PC-3 (cell line): ENCODE measurements at regions of chr2 and their contacts with region 1.

Region 1: GRCh38 chr2:11129598-11130449 is 25.4 kb upstream of the SLC66A3 start:
- DNase-seq: peak; percentile 72
- ATAC-seq: peak; percentile 65
- H3K4me3 ChIP-seq: peak overlapping the region; percentile 55; the same call in 1 of the 2 replicates
- H3K27ac ChIP-seq: no peak overlapping the region
- H3K4me1 ChIP-seq: peaks cover 21% of the 10 kb centered on the region
- H3K27me3 ChIP-seq: no peaks in the 10 kb centered on the region
- CTCF ChIP-seq: peak; percentile 65

Region 2: DNA sequence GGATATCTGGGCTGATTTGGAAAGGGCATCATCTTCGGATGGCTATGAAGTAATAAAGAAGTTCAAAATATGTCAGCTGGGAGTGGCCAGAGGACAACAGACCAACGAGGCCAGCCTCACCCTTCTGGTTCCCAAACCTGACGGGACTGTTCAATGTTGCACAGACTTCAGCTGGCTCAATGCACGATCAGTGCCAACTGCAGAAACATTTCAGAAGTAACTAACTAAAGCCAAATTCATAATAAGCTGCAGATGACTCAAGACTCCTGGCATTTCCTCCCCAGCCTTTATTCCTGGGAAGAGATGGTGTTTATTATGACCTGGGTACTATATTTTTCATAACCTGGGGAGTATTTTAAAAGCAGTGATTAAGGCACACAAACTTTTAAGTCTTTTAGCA is 412.2 kb before region 1 on chr2:
- CTCF ChIA-PET with region 1: no interaction called
- POLR2A ChIA-PET with region 1: interaction called, 3 read pairs
- intact Hi-C with region 1: loop called (anchors 5 kb)
- DNase-seq: peak; percentile 91
- ATAC-seq: peak; percentile 81
- H3K4me3 ChIP-seq: peak overlapping the region; percentile 20; the same call in 1 of the 2 replicates
- H3K27ac ChIP-seq: peak overlapping the region; percentile 36
- H3K4me1 ChIP-seq: peaks cover 47% of the 10 kb centered on the region
- H3K27me3 ChIP-seq: peaks cover 21% of the 10 kb centered on the region
- CTCF ChIP-seq: no peak

Region 3: DNA sequence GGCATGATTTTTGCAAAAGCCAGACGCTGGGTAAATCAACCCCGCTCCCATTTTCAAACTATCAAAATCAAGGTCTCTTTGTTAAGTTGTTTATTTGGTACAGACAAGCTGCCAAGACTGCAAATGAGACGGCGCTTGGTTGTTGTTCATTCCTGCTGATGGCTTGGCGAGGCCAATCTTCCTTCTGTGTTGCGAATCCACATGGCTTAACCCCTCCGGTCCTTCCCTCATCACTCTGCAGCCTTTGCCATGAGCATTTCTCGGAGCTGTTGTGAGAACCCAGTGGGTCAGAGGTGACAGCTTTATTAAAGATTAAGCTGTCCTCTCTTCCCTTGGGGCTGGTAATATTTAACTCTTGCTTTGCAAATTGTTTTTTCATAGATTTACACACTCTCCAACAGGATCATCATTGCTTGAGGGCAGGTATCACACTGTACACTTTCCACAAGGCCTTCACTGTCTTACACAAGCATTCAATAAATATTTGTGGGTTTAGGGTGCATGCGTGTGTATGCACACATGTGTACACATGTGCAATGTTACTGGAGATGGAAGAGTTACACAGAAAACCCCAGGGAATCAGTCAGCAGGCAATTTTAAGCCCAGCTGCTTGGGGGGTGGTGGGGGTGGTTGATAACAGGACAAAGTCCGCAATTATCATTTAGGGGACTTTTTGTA is 245.9 kb before region 1 on chr2:
- CTCF ChIA-PET with region 1: no interaction called
- POLR2A ChIA-PET with region 1: no interaction called
- intact Hi-C with region 1: no loop called
- DNase-seq: no peak
- ATAC-seq: no peak
- H3K4me3 ChIP-seq: no peak overlapping the region
- H3K27ac ChIP-seq: no peak overlapping the region
- H3K4me1 ChIP-seq: no peaks in the 10 kb centered on the region
- H3K27me3 ChIP-seq: 0 out of 2 replicates have a peak, but pooled peaks cover 4% of the 10 kb centered on the region
- CTCF ChIP-seq: no peak

Region 4: GRCh38 chr2:11004199-11004598 is 125.6 kb before region 1 on chr2:
- CTCF ChIA-PET with region 1: no interaction called
- POLR2A ChIA-PET with region 1: no interaction called
- intact Hi-C with region 1: no loop called
- DNase-seq: peak; percentile 78
- ATAC-seq: peak; percentile 95
- H3K4me3 ChIP-seq: no peak overlapping the region
- H3K27ac ChIP-seq: no peak overlapping the region
- H3K4me1 ChIP-seq: peaks cover 15% of the 10 kb centered on the region
- H3K27me3 ChIP-seq: no peaks in the 10 kb centered on the region
- CTCF ChIP-seq: no peak

Region 5: DNA sequence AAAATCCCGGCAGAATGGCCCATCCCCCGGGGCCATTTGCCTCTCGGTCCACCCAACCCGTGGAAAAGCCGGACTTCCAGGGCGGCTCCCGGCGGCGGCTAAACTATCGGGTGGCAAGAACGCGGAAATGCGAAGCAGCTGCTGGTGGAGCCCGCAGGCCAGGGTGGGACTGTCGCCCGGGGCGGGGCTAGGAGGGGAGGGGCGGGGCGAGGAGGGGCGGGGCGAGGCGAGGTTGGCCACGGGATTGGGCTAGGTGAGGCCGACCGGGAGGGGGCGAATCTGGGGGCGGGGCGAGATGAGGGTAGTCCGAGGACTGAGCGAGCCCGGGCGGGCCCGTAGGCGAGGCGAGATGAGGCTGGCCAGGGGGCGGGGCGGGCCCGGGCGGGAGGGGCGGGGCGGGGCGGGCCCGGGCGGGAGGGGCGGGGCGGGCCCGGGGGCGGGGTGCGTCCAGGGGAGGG is 25.1 kb after region 1 on chr2:
- CTCF ChIA-PET with region 1: interaction called, 3 read pairs
- POLR2A ChIA-PET with region 1: no interaction called
- intact Hi-C with region 1: loop called (anchors 2 kb)
- DNase-seq: peak; percentile 91
- ATAC-seq: peak; percentile 84
- H3K4me3 ChIP-seq: peak overlapping the region; percentile 68
- H3K27ac ChIP-seq: peak overlapping the region; percentile 83
- H3K4me1 ChIP-seq: peaks cover 12% of the 10 kb centered on the region
- H3K27me3 ChIP-seq: no peaks in the 10 kb centered on the region
- CTCF ChIP-seq: no peak

Region 6: GRCh38 chr2:11411768-11412448 is 282.1 kb after region 1 on chr2:
- CTCF ChIA-PET with region 1: no interaction called
- POLR2A ChIA-PET with region 1: no interaction called
- intact Hi-C with region 1: loop called (anchors 10 kb)
- DNase-seq: peak; percentile 71
- ATAC-seq: peak; percentile 55
- H3K4me3 ChIP-seq: peak overlapping the region; percentile 60
- H3K27ac ChIP-seq: no peak overlapping the region
- H3K4me1 ChIP-seq: peaks cover 14% of the 10 kb centered on the region
- H3K27me3 ChIP-seq: no peaks in the 10 kb centered on the region
- CTCF ChIP-seq: peak; percentile 93

Region 7: GRCh38 chr2:11583840-11584524 is 454.2 kb after region 1 on chr2:
- CTCF ChIA-PET with region 1: interaction called, 19 read pairs
- POLR2A ChIA-PET with region 1: no interaction called
- intact Hi-C with region 1: loop called (anchors 5 kb)
- DNase-seq: peak; percentile 89
- ATAC-seq: peak; percentile 85
- H3K4me3 ChIP-seq: no peak overlapping the region
- H3K27ac ChIP-seq: no peak overlapping the region
- H3K4me1 ChIP-seq: no peaks in the 10 kb centered on the region; the same call in 1 of the 2 replicates
- H3K27me3 ChIP-seq: no peaks in the 10 kb centered on the region
- CTCF ChIP-seq: peak; percentile 96